ENCODE measurements at regions of chr10 and their contacts with region 1.

Region 1: DNA sequence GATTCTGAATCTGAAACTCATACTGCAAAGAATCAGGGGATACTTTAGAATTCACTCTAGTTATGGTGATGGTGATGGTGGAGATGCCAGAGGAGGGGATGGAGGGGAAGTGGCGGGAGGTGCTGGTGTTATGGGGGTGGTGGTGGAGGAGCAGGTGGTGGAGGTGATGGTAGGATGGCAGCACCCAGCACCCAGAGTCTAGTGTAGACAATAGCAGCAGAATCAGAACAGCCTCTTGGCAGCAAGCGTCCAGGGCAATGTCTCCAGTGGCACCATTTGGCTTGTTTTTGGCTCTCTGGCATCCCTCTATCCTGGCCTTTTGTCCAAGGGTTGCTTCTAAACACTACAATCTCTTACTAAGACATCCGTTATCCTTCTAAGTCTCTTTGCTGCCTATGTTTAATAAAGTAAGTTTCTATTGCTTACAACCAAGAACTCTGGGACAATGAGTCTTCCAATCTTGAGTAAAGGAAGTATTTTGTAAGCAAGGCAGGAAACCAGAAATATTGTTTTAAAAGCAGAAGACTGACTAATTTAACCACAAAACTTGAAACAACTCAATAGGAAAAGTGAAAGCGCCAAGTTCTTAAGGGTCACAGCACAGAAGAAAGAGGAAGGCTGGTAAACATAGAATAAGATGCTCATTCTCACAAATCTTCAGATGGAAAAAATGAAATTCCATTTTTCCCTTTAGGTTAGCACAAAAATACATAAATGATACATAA is 42.4 kb upstream of the GDF10 start:
- DNase-seq: no peak
- H3K4me3 Mint-ChIP-seq: peak overlapping the region; percentile 40
- H3K27ac Mint-ChIP-seq: peak overlapping the region; percentile 63
- H3K4me1 Mint-ChIP-seq: peaks cover 60% of the 10 kb centered on the region
- H3K27me3 Mint-ChIP-seq: no peaks in the 10 kb centered on the region

Region 2: GRCh38 chr10:46106410-46107255 is 1150.9 kb before region 1 on chr10:
- intact Hi-C with region 1: no loop called
- DNase-seq: peak; percentile 59
- H3K4me3 Mint-ChIP-seq: peak overlapping the region; percentile 84
- H3K27ac Mint-ChIP-seq: peak overlapping the region; percentile 54
- H3K4me1 Mint-ChIP-seq: peaks cover 16% of the 10 kb centered on the region
- H3K27me3 Mint-ChIP-seq: peaks cover 20% of the 10 kb centered on the region

Region 3: GRCh38 chr10:46328853-46329689 is 928.5 kb before region 1 on chr10:
- intact Hi-C with region 1: no loop called
- DNase-seq: no peak
- H3K4me3 Mint-ChIP-seq: no peak overlapping the region
- H3K27ac Mint-ChIP-seq: no peak overlapping the region
- H3K4me1 Mint-ChIP-seq: no peaks in the 10 kb centered on the region
- H3K27me3 Mint-ChIP-seq: peaks cover 16% of the 10 kb centered on the region

Region 4: DNA sequence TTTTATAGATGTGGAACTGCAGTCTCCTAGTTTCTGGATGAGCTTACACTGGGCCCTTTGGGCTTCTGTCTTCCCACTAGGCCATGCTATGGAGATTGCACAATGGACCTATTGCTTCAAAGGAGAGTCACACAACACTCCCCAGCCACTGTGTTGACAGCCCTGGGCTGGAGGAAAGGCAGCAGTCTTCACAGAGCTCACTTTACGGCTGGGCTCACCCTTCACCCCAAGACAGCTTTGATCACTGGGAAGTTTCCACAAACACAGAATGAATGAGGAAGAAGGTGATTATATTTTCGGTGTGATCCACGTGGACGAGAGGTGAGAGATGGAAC is 50.3 kb before region 1 on chr10:
- intact Hi-C with region 1: loop called (anchors 5 kb)
- DNase-seq: no peak
- H3K4me3 Mint-ChIP-seq: no peak overlapping the region
- H3K27ac Mint-ChIP-seq: no peak overlapping the region
- H3K4me1 Mint-ChIP-seq: peaks cover 18% of the 10 kb centered on the region
- H3K27me3 Mint-ChIP-seq: peaks cover 1% of the 10 kb centered on the region

Region 5: GRCh38 chr10:47237316-47238260 is 20.0 kb before region 1 on chr10:
- intact Hi-C with region 1: no loop called
- DNase-seq: no peak
- H3K4me3 Mint-ChIP-seq: no peak overlapping the region
- H3K27ac Mint-ChIP-seq: no peak overlapping the region
- H3K4me1 Mint-ChIP-seq: no peaks in the 10 kb centered on the region
- H3K27me3 Mint-ChIP-seq: no peaks in the 10 kb centered on the region